ENCODE measurements at regions of chr1 and their contacts with region 1.

Region 1: GRCh38 chr1:41322835-41323627 is 38.2 kb upstream of the FOXO6 start:
- DNase-seq: peak; percentile 24
- H3K4me3 ChIP-seq: no peak overlapping the region
- H3K27ac ChIP-seq: no peak overlapping the region
- H3K4me1 ChIP-seq: no peaks in the 10 kb centered on the region
- H3K27me3 ChIP-seq: no peaks in the 10 kb centered on the region
- CTCF ChIP-seq: peak; percentile 53 to 62
- POLR2A ChIP-seq: no peak

Region 2: DNA sequence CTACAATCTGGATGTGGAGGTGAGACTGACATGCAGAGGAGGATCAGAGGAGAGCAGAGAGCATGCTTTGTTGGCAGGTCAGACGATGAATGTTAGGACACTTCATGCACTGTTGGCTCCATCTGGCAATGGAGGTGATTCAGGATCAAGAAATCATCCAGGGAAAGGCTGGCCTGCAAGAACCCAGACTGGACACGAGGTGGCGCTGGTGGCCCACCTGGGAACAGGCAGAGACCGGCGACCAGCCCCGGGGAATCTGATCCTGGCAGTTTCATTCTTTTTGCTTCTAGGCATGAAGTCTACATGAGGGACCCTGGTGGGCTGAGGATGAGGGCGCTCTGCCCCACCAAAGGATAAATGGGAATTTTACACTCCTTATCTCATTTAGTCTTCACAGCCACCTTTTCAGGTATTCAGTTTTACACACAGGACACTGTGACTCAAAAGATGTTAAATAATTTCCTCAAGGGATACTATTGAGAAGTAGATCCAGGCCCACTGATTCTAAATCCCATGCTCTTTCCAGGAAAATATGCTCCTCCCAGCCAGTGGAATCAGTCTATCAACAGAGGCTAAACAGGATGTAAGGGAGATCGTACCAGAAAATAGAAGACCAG is 54.8 kb before region 1 on chr1:
- CTCF ChIA-PET with region 1: no interaction called
- POLR2A ChIA-PET with region 1: no interaction called
- dilution Hi-C with region 1: no loop called
- intact Hi-C with region 1: loop called (anchors 1 kb)
- DNase-seq: peak; percentile 68
- H3K4me3 ChIP-seq: no peak overlapping the region
- H3K27ac ChIP-seq: no peak overlapping the region
- H3K4me1 ChIP-seq: no peaks in the 10 kb centered on the region
- H3K27me3 ChIP-seq: peaks cover 0 to 9% of the 10 kb centered on the region in 2 experiments
- CTCF ChIP-seq: peak; percentile 95 to 97
- POLR2A ChIP-seq: no peak

Region 3: DNA sequence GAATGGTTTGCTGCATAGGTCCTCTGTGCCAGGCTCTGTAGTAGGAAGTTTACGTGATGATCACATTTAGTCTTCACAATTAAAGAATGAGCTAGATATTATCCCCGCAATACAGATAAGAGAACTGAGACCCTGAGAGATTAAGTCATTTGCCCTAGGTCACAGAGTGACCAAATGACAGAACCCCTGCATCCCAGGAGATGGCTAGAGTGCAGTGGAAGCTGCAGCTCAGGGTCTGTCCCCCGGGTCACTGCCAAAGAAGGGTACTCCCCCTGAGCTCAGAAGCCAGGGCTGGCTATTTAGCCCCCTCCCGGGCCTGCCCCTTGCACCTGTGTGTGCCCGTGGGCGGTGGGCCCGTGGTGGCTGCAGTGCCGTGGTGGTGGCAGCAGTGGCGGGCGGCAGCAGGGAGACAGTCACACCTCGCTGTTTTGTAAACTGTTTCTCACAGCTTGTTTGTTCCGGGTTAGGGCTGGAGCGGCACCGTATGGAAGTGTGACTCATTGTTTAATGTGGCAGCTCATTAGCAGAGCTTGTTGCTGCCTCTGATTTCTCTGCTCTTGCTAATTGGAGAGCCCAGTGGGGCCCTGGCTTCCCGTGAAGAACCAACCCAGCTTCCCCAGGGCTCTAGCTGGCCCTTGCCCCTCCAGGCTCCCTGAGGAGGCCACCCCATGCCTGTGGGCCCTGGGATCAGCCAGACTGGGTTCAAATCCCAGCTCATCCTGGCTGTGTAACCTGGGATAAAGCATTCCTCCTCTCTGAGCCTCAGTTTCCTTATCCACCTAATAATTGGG is 18.9 kb after region 1 on chr1:
- CTCF ChIA-PET with region 1: interaction called, 11 read pairs
- POLR2A ChIA-PET with region 1: no interaction called
- dilution Hi-C with region 1: no loop called
- intact Hi-C with region 1: no loop called
- DNase-seq: peak; percentile 77
- H3K4me3 ChIP-seq: peak overlapping the region in 1 of 3 experiments; percentile 29
- H3K27ac ChIP-seq: peak overlapping the region; percentile 51
- H3K4me1 ChIP-seq: peaks cover 15% of the 10 kb centered on the region
- H3K27me3 ChIP-seq: peaks cover 4 to 6% of the 10 kb centered on the region in 2 experiments
- CTCF ChIP-seq: no peak
- POLR2A ChIP-seq: no peak

Region 4: GRCh38 chr1:41423511-41424221 is 100.6 kb after region 1 on chr1:
- CTCF ChIA-PET with region 1: interaction called, 54 read pairs
- POLR2A ChIA-PET with region 1: no interaction called
- dilution Hi-C with region 1: no loop called
- intact Hi-C with region 1: no loop called
- DNase-seq: no peak
- H3K4me3 ChIP-seq: no peak overlapping the region
- H3K27ac ChIP-seq: no peak overlapping the region
- H3K4me1 ChIP-seq: peaks cover 14% of the 10 kb centered on the region
- H3K27me3 ChIP-seq: no peaks in the 10 kb centered on the region
- CTCF ChIP-seq: peak in 1 of 2 donors; percentile 49
- POLR2A ChIP-seq: no peak